Calu3 (cell line): ENCODE measurements at regions of chr15 and their contacts with region 1.

Region 1: GRCh38 chr15:61871926-61872522 is 188.2 kb downstream of the VPS13C start:
- DNase-seq: no peak
- H3K4me3 Mint-ChIP-seq: no peak overlapping the region
- H3K27ac Mint-ChIP-seq: no peak overlapping the region
- H3K4me1 Mint-ChIP-seq: peaks cover 23% of the 10 kb centered on the region
- H3K27me3 Mint-ChIP-seq: no peaks in the 10 kb centered on the region
- CTCF ChIP-seq: peak; percentile 38

Region 2: DNA sequence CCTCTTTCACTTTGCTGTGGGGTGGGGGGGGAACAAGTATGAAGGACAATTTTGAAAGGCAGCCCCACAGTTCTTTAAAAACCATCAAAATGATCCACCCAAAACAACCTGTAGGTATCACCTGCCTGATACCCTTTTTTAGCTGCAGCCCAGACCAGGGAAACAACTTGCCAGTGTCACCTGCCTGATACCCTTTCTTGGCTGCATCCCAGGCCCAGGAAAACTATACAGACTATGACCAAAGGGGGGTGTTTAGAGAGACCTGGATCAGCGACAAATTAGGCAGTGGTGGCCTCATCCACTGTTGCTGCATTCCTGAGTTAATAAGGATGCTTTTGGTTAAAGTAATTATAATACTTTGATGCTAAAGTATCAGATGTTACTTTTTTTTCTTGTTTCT is 66.2 kb after region 1 on chr15:
- CTCF ChIA-PET with region 1: no interaction called
- intact Hi-C with region 1: no loop called
- DNase-seq: no peak
- H3K4me3 Mint-ChIP-seq: no peak overlapping the region
- H3K27ac Mint-ChIP-seq: no peak overlapping the region
- H3K4me1 Mint-ChIP-seq: peaks cover under 1% of the 10 kb centered on the region
- H3K27me3 Mint-ChIP-seq: no peaks in the 10 kb centered on the region
- CTCF ChIP-seq: no peak

Region 3: DNA sequence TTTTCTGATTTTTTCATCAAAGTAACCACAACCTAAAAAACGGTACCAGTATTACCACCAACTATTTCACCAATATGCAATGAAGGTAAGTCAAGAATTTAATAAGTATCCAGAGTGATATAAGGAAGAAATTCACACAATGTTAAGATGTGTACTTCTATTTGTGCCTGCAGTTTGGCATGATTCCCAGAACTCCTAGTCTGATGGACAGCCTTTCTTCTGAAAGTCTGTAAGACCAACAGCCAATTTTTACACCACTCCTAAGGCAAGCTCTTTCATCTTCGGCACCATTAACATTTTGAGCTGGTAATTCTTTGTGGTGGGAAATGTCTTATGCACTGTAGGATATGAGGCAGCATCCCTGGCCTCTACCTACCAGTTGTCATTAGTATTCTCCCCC is 79.9 kb after region 1 on chr15:
- CTCF ChIA-PET with region 1: no interaction called
- intact Hi-C with region 1: loop called (anchors 1 kb)
- DNase-seq: peak; percentile 7
- H3K4me3 Mint-ChIP-seq: no peak overlapping the region
- H3K27ac Mint-ChIP-seq: no peak overlapping the region
- H3K4me1 Mint-ChIP-seq: peaks cover 8% of the 10 kb centered on the region
- H3K27me3 Mint-ChIP-seq: no peaks in the 10 kb centered on the region
- CTCF ChIP-seq: no peak